ENCODE measurements at regions of chr1 and their contacts with region 1.

Region 1: DNA sequence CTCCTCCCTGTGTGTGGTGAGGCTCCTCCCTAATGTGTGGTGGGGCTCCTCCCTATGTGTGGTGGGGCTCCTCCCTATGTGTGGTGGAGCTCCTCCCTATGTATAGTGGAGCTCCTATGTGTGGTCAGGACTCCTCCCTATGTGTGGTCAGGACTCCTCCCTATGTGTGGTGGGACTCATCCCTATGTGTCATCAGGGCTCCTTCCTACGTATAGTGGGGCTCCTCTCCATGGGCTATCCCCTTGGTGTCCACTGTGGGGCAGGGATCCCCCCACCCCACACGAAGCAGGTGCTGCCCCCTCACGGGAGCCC is 29.6 kb downstream of the PRSS38 start:
- DNase-seq: peak in 1 of 14 experiments; percentile 28
- ATAC-seq: no peak
- H3K4me3 ChIP-seq: no peak overlapping the region
- H3K4me3 Mint-ChIP-seq: no peak overlapping the region
- H3K27ac ChIP-seq: no peak overlapping the region
- H3K27ac Mint-ChIP-seq: no peak overlapping the region
- H3K4me1 ChIP-seq: peaks cover 10% of the 10 kb centered on the region
- H3K4me1 Mint-ChIP-seq: peaks cover 8% of the 10 kb centered on the region
- H3K27me3 ChIP-seq: no peaks in the 10 kb centered on the region
- H3K27me3 Mint-ChIP-seq: no peaks in the 10 kb centered on the region
- CTCF ChIP-seq: no peak

Region 2: GRCh38 chr1:227946624-227947385 is 101.7 kb after region 1 on chr1:
- CTCF ChIA-PET with region 1: no interaction called
- POLR2A ChIA-PET with region 1: no interaction called
- intact Hi-C with region 1: loop called in 1 of 2 experiments (anchors 2 kb)
- DNase-seq: peak in 13 of 14 experiments; percentile 35 to 75 (median 52)
- ATAC-seq: peak; percentile 71
- H3K4me3 ChIP-seq: peak overlapping the region; percentile 33
- H3K4me3 Mint-ChIP-seq: peak overlapping the region; percentile 72
- H3K27ac ChIP-seq: no peak overlapping the region
- H3K27ac Mint-ChIP-seq: no peak overlapping the region
- H3K4me1 ChIP-seq: peaks cover 22% of the 10 kb centered on the region
- H3K4me1 Mint-ChIP-seq: no peaks in the 10 kb centered on the region
- H3K27me3 ChIP-seq: peaks cover 13 to 19% of the 10 kb centered on the region in 2 experiments
- H3K27me3 Mint-ChIP-seq: peaks cover 19% of the 10 kb centered on the region
- CTCF ChIP-seq: peak; percentile 87

Measured in CD4-positive, alpha-beta T cell (primary cell).